Right ventricle myocardium inferior (tissue), 1 donor: ENCODE measurements at regions of chr4 and their contacts with region 1.

Region 1: DNA sequence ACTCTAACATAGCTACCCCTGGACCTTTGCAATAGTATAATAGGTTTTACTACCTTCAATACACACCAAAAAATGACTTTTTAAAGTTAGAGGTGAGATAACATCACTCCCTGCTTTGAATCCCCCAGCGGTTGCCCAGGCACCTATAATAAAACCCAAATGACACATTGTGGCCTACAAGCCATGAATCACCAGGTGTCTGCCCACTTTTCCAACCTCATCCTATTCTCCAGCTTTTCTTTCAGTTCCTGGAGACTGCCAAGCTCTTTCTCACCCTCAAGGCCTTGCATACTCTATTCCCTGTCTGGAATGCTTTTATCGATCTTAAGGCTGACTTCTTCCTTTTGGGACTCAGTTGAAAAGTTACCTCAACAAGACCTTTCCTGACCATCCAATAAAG is 16.4 kb upstream of the PRSS48 start:
- DNase-seq: no peak
- ATAC-seq: no peak

Region 2: DNA sequence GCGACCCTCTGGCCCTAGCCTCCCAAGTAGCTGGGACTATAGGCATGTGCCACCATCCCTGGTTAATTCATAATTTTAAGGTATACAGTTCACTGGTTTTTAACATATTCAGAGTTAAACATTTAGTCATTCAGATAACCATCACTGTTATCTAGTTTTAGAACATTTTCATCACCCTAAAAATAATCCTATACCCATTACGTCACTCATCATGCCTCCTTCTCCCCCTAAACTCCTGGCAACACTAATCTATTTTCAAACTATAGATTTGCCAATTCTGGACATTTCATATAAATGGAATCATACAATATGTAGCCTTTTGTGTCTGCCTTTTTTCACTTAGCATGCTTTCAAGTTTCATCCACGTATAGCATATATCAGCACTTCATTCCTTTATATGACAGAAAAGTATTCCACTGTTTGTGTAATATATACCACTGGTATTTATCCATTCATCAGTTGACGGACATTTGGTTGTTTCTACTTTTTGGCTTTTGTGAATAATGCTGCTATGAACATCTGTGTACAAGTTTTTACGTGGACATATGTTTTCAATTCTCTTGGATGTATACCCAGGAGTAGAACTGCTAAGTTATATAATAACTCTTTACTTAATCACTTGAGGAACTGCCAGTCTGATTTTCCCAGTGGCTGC is 193.1 kb before region 1 on chr4:
- intact Hi-C with region 1: no loop called
- DNase-seq: no peak
- ATAC-seq: no peak

Region 3: DNA sequence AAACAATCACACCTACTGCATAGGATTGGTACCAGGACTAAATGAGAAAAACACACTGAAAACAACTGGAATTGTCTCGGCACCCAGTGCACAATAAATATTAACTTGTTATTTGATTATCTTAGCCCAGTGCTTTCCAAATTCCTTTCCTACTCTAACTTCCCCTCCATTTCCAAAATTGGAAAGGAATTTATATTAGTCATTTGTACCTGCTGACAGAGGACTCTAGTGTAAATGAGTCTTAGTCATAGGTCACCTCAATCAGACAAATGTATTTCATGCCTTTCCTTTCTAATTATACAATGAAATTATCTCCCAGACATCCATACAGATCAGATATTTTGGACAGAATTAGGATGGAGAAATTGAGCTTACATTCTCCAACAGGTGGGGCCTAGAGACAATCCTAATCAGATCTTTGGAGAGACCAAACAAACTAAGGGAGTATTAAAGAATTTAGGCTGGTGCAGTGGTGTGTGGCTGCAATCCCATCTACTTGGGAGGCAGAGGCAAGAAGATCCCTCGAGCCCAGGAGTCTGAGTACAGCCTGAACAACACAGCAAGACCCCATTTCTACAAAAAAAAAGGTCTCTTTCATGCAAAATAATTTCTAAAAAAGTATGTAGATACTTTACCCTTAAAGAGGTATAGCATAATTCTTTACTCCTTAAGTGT is 54.8 kb after region 1 on chr4:
- intact Hi-C with region 1: loop called (anchors 5 kb)
- DNase-seq: no peak
- ATAC-seq: peak; percentile 63